ENCODE measurements at regions of chrX and their contacts with region 1.

Region 1: DNA sequence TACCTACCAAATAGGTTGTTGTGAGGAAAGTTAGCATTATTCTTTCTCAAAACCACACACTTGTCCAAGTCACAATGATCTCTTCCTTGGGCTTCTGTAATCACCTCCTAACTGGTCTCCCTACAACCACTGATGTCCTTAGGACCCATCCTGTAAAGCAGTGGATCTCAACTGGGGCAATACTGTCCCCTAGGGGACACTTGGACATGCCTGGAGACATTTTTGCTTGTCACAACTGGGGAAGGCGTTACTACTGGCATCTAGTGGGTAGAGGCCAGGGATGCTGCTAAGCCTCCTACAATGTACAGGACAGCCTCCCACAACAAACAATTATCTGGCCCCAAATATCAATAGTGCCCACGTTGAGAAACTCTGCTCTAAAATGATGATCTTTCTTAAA is 118.7 kb upstream of the AP1S2 start:
- DNase-seq: peak in 1 of 2 donors; percentile 29
- ATAC-seq: peak in 7 of 8 donors; percentile 55 to 89 (median 77)
- H3K4me3 ChIP-seq: no peak overlapping the region
- H3K27ac ChIP-seq: no peak overlapping the region
- H3K4me1 ChIP-seq: peaks cover 0 to 20% (median 0%) of the 10 kb centered on the region in 9 donors
- H3K27me3 ChIP-seq: peaks cover 0 to 50% (median 0%) of the 10 kb centered on the region in 7 donors
- CTCF ChIP-seq: peak in 8 of 9 donors; percentile 19 to 63 (median 49)

Region 2: DNA sequence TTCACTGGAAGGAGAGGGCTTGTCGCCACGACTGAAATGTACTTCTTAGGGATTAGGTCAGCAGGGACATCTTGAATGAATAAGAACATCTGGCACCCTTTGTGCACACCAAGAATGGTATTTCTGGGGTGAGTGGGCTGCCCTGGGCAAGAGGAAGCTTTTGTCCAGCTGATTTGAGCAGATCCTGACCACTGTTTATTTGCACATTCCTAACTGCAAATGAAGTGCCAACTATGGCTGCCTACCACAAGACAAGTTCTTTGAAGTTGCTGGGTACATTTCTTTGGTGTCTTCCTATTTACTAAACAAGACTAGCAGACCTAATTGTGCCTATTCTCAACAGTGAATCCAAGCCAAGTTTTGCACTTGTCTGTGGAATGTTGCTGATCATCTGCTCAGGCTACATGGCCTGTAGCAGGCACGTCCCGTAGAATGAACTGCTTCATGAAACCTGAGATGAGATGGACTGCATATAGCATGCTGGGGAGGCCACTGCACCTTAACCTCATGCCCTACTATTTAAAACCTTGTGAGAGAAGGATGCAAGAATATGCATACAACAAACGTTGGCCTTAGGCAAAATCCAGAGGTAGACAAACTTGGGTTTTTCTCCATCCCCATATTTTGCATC is 525.2 kb before region 1 on chrX:
- intact Hi-C with region 1: no loop called
- DNase-seq: no peak
- ATAC-seq: no peak
- H3K4me3 ChIP-seq: no peak overlapping the region
- H3K27ac ChIP-seq: no peak overlapping the region
- H3K4me1 ChIP-seq: peaks cover 0 to 5% (median 0%) of the 10 kb centered on the region in 9 donors
- H3K27me3 ChIP-seq: peaks cover 0 to 65% (median 0%) of the 10 kb centered on the region in 7 donors
- CTCF ChIP-seq: no peak

Region 3: GRCh38 chrX:15761564-15762191 is 211.6 kb before region 1 on chrX:
- intact Hi-C with region 1: loop called in 1 of 10 experiments (anchors 10 kb)
- DNase-seq: no peak
- ATAC-seq: peak in 1 of 8 donors; percentile 64
- H3K4me3 ChIP-seq: no peak overlapping the region
- H3K27ac ChIP-seq: no peak overlapping the region
- H3K4me1 ChIP-seq: peaks cover 0 to 4% (median 0%) of the 10 kb centered on the region in 9 donors
- H3K27me3 ChIP-seq: no peaks in the 10 kb centered on the region
- CTCF ChIP-seq: peak; percentile 15 to 87 (median 61)

Region 4: GRCh38 chrX:15854712-15855567 is 118.4 kb before region 1 on chrX and contains the start of gene AP1S2:
- intact Hi-C with region 1: loop called in 2 of 10 experiments (anchors 2 to 5 kb)
- DNase-seq: peak; percentile 90 to 92
- ATAC-seq: peak; percentile 96 to 99 (median 98)
- H3K4me3 ChIP-seq: peak within 1 kb of the TSS; percentile 47 to 87 (median 73)
- H3K27ac ChIP-seq: peak within 1 kb of the TSS; percentile 85 to 95 (median 92)
- H3K4me1 ChIP-seq: peaks cover 0 to 39% (median 10%) of the 10 kb centered on the region in 9 donors
- H3K27me3 ChIP-seq: peaks cover 0 to 76% (median 0%) of the 10 kb centered on the region in 7 donors
- CTCF ChIP-seq: no peak
- total RNA-seq, gene AP1S2: 112 to 191 (median 131) TPM

Region 5: GRCh38 chrX:16160729-16161128 is 187.4 kb after region 1 on chrX:
- intact Hi-C with region 1: no loop called
- DNase-seq: no peak
- ATAC-seq: no peak
- H3K4me3 ChIP-seq: no peak overlapping the region
- H3K27ac ChIP-seq: no peak overlapping the region
- H3K4me1 ChIP-seq: no peaks in the 10 kb centered on the region
- H3K27me3 ChIP-seq: peaks cover 0 to 39% (median 0%) of the 10 kb centered on the region in 7 donors
- CTCF ChIP-seq: no peak